ENCODE measurements at regions of chr11 and their contacts with region 1.

Region 1: DNA sequence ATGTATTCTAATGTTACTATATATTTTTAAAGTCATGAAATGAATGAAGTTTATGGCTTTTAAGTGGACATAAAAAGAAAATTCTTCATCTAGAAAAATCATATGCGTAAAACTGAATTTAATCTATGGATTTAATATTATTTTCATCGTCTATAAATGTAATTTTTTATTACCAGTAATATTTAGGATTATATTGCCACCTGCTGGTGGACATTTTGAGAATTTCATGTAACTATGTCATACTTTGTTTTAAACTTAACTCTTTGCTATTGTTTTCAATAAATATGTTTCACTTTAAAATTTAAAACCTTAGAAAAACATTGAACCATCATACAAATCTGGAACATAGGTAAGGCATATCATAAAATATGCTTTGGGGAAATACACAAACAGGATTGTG is 66.5 kb upstream of the CEP126 start:
- DNase-seq: no peak
- ATAC-seq: no peak
- H3K4me3 ChIP-seq: no peak overlapping the region
- H3K27ac ChIP-seq: no peak overlapping the region
- H3K4me1 ChIP-seq: no peaks in the 10 kb centered on the region
- H3K27me3 ChIP-seq: no peaks in the 10 kb centered on the region
- CTCF ChIP-seq: peak in 6 of 7 experiments; percentile 25 to 52 (median 38)
- POLR2A ChIP-seq: no peak

Region 2: DNA sequence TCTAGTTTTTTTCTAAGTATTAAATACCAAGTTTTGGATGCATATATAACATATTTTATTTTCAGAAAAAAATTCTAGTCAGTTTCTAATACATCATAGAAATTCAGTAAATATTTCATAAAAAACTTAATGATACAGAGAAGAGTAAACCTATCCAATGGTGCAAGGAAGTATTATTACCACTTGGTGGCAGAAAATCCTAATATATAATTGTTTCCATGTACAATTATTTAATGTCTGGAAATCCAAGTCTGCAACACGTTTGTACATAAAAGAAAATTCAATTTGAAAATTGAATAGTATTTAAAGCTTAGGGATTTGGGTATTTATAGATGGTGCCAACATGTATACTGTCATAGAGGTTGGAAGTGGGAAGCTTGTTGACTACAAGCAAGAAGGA is 391.4 kb before region 1 on chr11:
- intact Hi-C with region 1: loop called (anchors 10 kb)
- DNase-seq: no peak
- ATAC-seq: no peak
- H3K4me3 ChIP-seq: no peak overlapping the region
- H3K27ac ChIP-seq: no peak overlapping the region
- H3K4me1 ChIP-seq: no peaks in the 10 kb centered on the region
- H3K27me3 ChIP-seq: no peaks in the 10 kb centered on the region
- CTCF ChIP-seq: peak in 6 of 7 experiments; percentile 13 to 57 (median 42)
- POLR2A ChIP-seq: no peak

Measured in body of pancreas (tissue), 4 donors.